CD4-positive, alpha-beta memory T cell (primary cell): ENCODE measurements at regions of chr11 and their contacts with region 1.

Region 1: DNA sequence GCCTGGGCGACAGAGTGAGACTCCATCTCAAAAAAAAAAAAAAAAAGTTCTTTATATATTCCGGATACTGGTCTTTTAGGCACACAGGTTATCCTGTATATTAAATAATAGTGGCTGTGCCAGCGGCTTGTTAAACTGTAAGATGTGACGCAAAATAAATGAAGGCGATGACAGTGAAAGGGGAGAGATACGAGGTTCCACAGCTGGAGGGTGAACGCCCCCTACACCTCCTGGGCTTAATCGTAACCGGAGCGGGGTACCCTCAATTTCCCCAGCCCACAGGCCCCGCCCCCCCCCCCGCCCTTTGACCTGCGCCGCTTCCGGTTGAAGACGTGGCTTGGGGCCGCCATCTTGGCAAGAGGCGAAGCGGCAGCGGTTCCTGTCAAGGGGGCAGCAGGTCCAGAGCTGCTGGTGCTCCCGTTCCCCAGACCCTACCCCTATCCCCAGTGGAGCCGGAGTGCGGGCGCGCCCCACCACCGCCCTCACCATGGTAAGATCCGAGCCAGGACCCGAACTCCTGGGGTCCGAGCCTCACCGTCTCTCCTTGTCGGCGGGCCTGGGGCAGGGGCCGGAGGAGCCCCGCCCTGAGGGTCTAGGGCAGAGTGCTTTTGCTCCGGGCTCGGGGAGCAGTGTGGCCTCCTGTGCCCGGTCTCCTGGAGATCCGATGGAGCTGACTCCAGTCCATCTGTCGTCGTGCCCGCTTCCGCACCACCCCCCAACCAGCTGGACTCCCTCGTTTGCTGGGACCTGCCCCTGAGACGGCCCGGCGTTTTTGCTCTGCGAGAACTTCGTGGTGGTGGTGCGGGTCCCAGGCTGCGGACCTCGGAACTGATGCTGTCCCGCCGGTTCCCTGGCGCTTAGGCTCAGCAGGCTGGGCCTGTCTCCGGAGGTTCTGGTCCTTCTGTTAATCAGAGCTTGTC is at the start of gene ARCN1:
- DNase-seq: peak; percentile 79 to 87 (median 81)
- H3K4me3 ChIP-seq: peak within 1 kb of the TSS; percentile 79 to 93
- H3K4me3 Mint-ChIP-seq: peak within 1 kb of the TSS; percentile 92 to 99 (median 98)
- H3K27ac ChIP-seq: peak within 1 kb of the TSS; percentile 100
- H3K27ac Mint-ChIP-seq: peak within 1 kb of the TSS; percentile 94 to 99 (median 98)
- H3K4me1 ChIP-seq: peaks cover 50% of the 10 kb centered on the region
- H3K4me1 Mint-ChIP-seq: peaks cover 32 to 54% (median 44%) of the 10 kb centered on the region in 4 donors
- H3K27me3 ChIP-seq: no peaks in the 10 kb centered on the region
- H3K27me3 Mint-ChIP-seq: no peaks in the 10 kb centered on the region
- total RNA-seq, gene ARCN1: 133 to 134 TPM

Region 2: GRCh38 chr11:118401151-118401878 is 171.0 kb before region 1 on chr11 and contains the start of gene ATP5MG:
- CTCF ChIA-PET with region 1: no interaction called
- POLR2A ChIA-PET with region 1: no interaction called
- intact Hi-C with region 1: loop called (anchors 5 kb)
- DNase-seq: peak; percentile 92 to 94 (median 94)
- H3K4me3 ChIP-seq: peak within 1 kb of the TSS; percentile 87 to 93
- H3K4me3 Mint-ChIP-seq: peak within 1 kb of the TSS; percentile 91 to 99 (median 96)
- H3K27ac ChIP-seq: peak within 1 kb of the TSS; percentile 82
- H3K27ac Mint-ChIP-seq: peak within 1 kb of the TSS; percentile 99 to 100 (median 99)
- H3K4me1 ChIP-seq: peaks cover 72% of the 10 kb centered on the region
- H3K4me1 Mint-ChIP-seq: peaks cover 39 to 87% (median 65%) of the 10 kb centered on the region in 4 donors
- H3K27me3 ChIP-seq: no peaks in the 10 kb centered on the region
- H3K27me3 Mint-ChIP-seq: no peaks in the 10 kb centered on the region
- total RNA-seq, gene ATP5MG: 158 to 161 TPM

Region 3: DNA sequence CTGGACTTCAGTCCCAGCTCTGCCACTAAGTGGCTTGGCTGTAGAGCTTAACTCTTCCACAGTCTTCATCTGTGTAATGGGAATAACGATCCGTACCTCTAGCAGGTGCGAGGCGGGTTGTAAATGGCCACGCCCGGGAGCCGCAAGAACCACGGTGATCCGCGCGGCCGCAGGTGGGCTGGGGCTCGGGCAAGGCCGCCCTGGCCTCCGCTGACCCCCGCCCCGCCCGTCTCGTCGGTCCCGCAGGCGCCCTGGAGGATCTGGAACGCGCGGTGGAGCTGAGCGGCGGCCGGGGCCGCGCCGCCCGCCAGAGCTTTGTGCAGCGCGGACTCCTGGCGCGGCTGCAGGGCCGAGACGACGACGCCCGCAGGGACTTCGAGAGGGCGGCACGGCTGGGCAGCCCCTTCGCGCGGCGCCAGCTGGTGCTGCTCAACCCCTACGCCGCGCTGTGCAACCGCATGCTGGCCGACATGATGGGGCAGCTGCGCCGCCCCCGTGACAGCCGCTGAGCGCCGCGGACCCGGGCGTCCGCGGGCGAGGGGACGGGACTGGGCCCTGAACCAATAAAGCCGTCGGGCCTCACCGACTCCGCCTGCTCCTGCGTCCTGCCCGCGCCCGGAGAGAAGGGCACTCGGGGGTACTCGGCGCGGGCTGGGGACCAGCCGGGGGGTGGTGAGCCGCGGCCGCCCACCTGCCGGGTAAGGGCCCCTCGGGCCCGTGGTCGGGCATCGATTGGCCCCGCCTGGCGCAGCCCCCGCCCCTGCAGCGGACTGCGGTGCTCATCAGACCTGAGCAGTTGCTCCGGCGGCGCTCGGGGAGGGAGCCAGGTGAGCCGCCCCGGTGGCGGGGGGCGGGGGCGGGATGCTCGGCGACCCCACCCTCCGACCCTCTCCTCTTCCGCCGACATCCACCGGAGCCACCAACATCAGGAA is 41.6 kb before region 1 on chr11 and contains the start of gene TMEM25:
- CTCF ChIA-PET with region 1: no interaction called
- POLR2A ChIA-PET with region 1: interaction called, 10 read pairs
- intact Hi-C with region 1: loop called (anchors 5 kb)
- DNase-seq: peak; percentile 68 to 78 (median 72)
- H3K4me3 ChIP-seq: peak within 1 kb of the TSS; percentile 65 to 77
- H3K4me3 Mint-ChIP-seq: peak within 1 kb of the TSS; percentile 91 to 98 (median 93)
- H3K27ac ChIP-seq: peak within 1 kb of the TSS; percentile 65
- H3K27ac Mint-ChIP-seq: peak within 1 kb of the TSS; percentile 84 to 97 (median 92)
- H3K4me1 ChIP-seq: peaks cover 32% of the 10 kb centered on the region
- H3K4me1 Mint-ChIP-seq: peaks cover 19 to 47% (median 31%) of the 10 kb centered on the region in 4 donors
- H3K27me3 ChIP-seq: no peaks in the 10 kb centered on the region
- H3K27me3 Mint-ChIP-seq: no peaks in the 10 kb centered on the region
- total RNA-seq, gene TMEM25: 19.5 to 20.0 TPM

Region 4: DNA sequence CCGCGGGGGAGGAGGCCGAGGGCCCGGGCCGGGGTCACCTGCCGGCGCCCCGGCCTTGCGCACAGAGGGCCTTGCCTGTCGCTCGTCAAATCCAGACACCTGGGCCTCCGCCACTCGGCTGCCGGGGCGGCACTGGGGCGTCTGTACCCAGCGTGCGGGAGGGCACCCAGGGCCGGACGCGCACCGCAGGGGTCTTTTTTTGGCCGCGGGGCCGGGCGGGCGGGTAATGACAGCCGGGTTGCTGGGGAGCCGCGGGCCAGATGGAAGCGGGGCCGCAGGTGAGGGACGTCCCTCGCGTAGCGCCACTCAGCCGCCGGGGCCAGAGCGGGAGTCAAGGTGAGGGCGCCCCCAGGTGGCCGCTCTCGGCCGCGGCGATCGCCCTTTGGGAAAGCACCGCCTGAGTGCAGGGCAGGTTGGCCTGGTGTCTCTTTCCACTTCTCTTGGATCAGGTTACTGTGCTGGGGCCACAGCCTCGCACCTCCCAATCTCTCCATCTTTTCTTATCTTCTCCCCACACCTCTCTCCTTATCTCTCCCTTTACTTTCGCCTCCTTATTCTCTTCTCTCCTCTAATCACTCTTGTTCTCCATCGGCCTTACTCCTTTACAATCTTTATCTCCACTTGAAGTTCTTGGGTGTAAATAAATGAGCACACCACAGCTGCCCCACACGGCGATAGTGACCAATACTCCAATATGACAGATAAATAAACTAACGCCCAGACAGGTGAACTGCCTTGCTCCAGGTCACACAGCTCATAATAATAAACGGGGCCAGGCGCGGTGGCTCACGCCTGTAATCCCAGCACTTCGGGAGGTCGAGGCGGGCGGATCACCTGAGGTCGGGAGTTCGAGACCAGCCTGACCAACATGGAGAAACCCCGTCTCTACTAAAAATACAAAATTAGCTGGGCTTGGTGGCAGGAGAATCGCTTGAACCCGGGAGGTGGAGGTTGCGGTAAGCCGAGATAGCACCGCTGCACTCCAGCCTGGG is 38.8 kb after region 1 on chr11:
- CTCF ChIA-PET with region 1: interaction called, 4 read pairs
- POLR2A ChIA-PET with region 1: interaction called, 3 read pairs
- intact Hi-C with region 1: loop called (anchors 2 kb)
- DNase-seq: peak; percentile 79 to 87 (median 83)
- H3K4me3 ChIP-seq: peak overlapping the region; percentile 29 to 54
- H3K4me3 Mint-ChIP-seq: peak overlapping the region; percentile 65 to 86 (median 78)
- H3K27ac ChIP-seq: peak overlapping the region; percentile 67
- H3K27ac Mint-ChIP-seq: peak overlapping the region in 5 of 7 donors; percentile 45 to 94 (median 74)
- H3K4me1 ChIP-seq: peaks cover 24% of the 10 kb centered on the region
- H3K4me1 Mint-ChIP-seq: peaks cover 15 to 35% (median 21%) of the 10 kb centered on the region in 4 donors
- H3K27me3 ChIP-seq: no peaks in the 10 kb centered on the region
- H3K27me3 Mint-ChIP-seq: peaks cover 4% of the 10 kb centered on the region in 2 donors

Region 5: DNA sequence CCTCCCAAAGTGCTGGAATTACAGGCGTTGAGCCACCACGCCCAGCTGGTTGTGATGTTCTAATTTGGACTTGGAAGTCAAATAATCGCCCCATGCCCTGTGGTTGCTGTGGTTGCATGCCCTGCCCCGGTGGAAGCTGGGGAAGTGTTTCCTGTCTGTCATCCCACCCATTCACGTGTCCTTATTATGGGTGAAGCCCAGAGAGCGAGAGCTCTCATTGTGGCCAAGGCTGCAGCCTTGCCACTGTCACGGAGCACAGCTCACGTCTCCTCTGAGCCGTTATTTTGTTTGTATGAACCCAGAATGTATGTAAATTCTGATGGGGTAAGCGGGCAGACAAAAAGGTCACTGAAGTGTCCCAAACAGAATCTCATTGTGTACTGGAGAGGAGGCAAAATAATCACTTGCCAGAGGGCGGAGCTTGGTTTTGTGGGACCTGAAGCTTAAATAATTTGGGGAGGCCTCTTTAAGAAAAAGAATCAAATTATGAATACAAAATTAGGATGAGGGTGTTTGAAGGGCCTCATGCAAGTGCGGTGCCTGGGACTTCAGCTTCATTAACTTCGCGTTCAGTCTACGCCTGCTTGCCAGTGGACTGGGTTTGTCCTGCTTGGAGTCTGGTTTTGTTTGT is 132.9 kb after region 1 on chr11:
- CTCF ChIA-PET with region 1: no interaction called
- POLR2A ChIA-PET with region 1: no interaction called
- intact Hi-C with region 1: no loop called
- DNase-seq: peak; percentile 63 to 72 (median 70)
- H3K4me3 ChIP-seq: peak overlapping the region in 1 of 2 donors; percentile 29
- H3K4me3 Mint-ChIP-seq: peak overlapping the region; percentile 48 to 90 (median 74)
- H3K27ac ChIP-seq: peak overlapping the region; percentile 3
- H3K27ac Mint-ChIP-seq: peak overlapping the region; percentile 61 to 95 (median 89)
- H3K4me1 ChIP-seq: peaks cover 50% of the 10 kb centered on the region
- H3K4me1 Mint-ChIP-seq: peaks cover 27 to 48% (median 37%) of the 10 kb centered on the region in 4 donors
- H3K27me3 ChIP-seq: no peaks in the 10 kb centered on the region
- H3K27me3 Mint-ChIP-seq: no peaks in the 10 kb centered on the region